Calu3 (cell line): ENCODE measurements at regions of chr3 and their contacts with region 1.

Region 1: DNA sequence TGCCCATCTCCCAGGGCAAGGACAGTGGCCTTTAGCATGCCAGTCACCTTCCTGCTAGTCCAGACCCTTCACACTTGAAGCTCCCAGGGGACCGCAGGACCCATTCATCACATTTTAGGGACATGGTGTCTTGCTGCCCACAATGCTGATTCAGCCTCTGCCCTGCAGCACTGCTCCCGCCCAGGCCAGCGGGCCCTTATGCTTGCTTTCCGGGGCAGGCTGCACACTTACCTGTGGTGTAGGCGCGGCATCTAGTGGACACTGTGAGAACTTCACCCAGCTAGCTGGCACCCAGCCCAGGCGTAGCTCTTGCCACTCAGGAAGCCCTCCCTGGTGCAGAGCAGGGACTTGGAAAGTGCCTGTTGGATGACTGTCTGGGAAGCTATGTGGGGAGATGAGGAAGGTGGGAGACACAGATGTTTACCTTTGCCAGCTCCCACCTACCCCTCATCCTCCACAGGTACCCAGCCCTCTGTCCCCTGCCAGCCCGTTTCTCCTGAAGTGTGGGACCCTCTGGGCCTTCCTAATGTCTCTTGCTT is 26.2 kb upstream of the NR2C2 start:
- DNase-seq: peak; percentile 87
- H3K4me3 Mint-ChIP-seq: no peak overlapping the region
- H3K27ac Mint-ChIP-seq: no peak overlapping the region
- H3K4me1 Mint-ChIP-seq: no peaks in the 10 kb centered on the region
- H3K27me3 Mint-ChIP-seq: peaks cover 64% of the 10 kb centered on the region
- CTCF ChIP-seq: peak; percentile 91

Region 2: GRCh38 chr3:13161024-13161759 is 1760.0 kb before region 1 on chr3:
- CTCF ChIA-PET with region 1: no interaction called
- intact Hi-C with region 1: no loop called
- DNase-seq: no peak
- H3K4me3 Mint-ChIP-seq: no peak overlapping the region
- H3K27ac Mint-ChIP-seq: no peak overlapping the region
- H3K4me1 Mint-ChIP-seq: no peaks in the 10 kb centered on the region
- H3K27me3 Mint-ChIP-seq: peaks cover 96% of the 10 kb centered on the region
- CTCF ChIP-seq: no peak

Region 3: GRCh38 chr3:14508961-14509795 is 412.0 kb before region 1 on chr3:
- CTCF ChIA-PET with region 1: no interaction called
- intact Hi-C with region 1: loop called (anchors 2 kb)
- DNase-seq: peak; percentile 82
- H3K4me3 Mint-ChIP-seq: no peak overlapping the region
- H3K27ac Mint-ChIP-seq: no peak overlapping the region
- H3K4me1 Mint-ChIP-seq: no peaks in the 10 kb centered on the region
- H3K27me3 Mint-ChIP-seq: peaks cover 31% of the 10 kb centered on the region
- CTCF ChIP-seq: peak; percentile 92

Region 4: GRCh38 chr3:14678015-14678503 is 243.1 kb before region 1 on chr3:
- CTCF ChIA-PET with region 1: interaction called, 22 read pairs
- intact Hi-C with region 1: loop called (anchors 1 kb)
- DNase-seq: no peak
- H3K4me3 Mint-ChIP-seq: no peak overlapping the region
- H3K27ac Mint-ChIP-seq: no peak overlapping the region
- H3K4me1 Mint-ChIP-seq: no peaks in the 10 kb centered on the region
- H3K27me3 Mint-ChIP-seq: peaks cover 9% of the 10 kb centered on the region
- CTCF ChIP-seq: no peak

Region 5: DNA sequence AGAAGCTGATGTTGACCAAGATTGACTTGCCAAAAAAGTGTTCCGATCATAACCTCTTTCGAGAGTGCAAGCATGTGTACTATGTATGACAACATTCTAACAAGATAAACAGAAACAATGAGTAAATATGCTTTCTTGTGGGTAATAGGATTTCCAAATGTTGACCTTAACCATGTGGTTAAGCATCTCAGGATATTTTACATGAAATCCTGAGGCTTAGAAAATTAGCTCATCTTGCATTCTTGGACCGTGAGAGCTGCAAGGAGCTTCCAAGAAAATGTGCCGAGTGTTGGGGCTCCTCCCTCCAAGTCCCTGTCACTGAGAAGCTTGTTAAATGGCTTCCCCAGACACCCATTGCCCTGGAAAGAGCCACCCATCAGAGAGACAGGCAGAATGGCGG is 196.1 kb before region 1 on chr3:
- CTCF ChIA-PET with region 1: no interaction called
- intact Hi-C with region 1: no loop called
- DNase-seq: no peak
- H3K4me3 Mint-ChIP-seq: no peak overlapping the region
- H3K27ac Mint-ChIP-seq: no peak overlapping the region
- H3K4me1 Mint-ChIP-seq: no peaks in the 10 kb centered on the region
- H3K27me3 Mint-ChIP-seq: peaks cover 8% of the 10 kb centered on the region
- CTCF ChIP-seq: no peak

Region 6: DNA sequence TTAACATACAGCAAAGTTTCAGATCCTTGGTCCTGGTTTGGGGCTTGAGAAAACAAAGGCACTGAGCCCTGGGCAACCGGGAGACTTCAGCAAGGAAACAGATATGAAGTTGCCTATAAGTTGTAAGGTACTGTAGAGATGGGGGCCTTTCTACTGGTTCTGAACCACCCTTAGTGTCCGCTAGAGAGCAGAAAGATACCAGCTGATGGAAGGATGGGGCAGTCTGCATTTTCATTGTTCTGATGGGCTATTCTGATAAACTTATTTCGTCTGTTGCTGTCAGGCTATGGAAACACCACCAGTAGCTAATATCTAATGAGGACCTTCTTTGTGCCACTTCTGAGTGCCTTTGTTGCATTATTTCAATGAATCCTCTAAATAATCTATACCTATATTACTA is 63.6 kb before region 1 on chr3:
- CTCF ChIA-PET with region 1: interaction called, 4 read pairs
- intact Hi-C with region 1: loop called (anchors 2 kb)
- DNase-seq: no peak
- H3K4me3 Mint-ChIP-seq: no peak overlapping the region
- H3K27ac Mint-ChIP-seq: no peak overlapping the region
- H3K4me1 Mint-ChIP-seq: no peaks in the 10 kb centered on the region
- H3K27me3 Mint-ChIP-seq: peaks cover 79% of the 10 kb centered on the region
- CTCF ChIP-seq: no peak

Region 7: DNA sequence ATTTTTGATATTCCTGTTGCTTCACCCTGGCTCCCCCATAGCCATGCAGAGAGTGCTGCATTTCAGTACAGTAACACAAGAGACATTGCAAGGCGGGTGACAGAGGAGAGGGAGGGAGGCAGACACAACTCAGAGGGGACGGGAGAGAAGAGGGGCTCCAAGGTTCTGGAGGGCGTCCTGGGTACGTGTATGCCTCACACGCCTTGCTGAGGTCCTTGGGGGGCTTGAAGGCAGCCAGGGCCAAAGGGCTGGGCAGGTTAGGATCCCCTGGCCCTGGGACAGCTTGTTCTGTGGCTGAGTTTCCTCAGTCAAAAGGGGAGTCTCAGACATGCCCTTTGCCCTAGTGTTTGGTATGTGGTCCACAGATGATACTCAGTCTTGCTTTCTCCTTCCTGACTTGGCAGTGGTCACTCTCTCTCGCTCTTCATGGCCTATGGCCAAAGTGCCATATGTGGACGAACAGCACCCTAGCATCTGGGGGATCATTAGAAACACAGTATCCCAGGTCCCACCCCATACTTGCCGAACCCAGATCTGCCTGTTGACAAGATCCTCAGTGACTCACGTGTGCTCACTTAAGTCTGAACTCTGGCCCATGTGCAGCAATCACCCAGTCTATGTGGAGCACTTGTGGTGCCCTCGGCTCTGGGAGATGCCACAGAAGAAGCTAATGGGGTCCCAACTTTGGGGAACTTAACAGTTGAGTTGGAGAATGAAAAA is 49.5 kb before region 1 on chr3:
- CTCF ChIA-PET with region 1: no interaction called
- intact Hi-C with region 1: no loop called
- DNase-seq: no peak
- H3K4me3 Mint-ChIP-seq: no peak overlapping the region
- H3K27ac Mint-ChIP-seq: no peak overlapping the region
- H3K4me1 Mint-ChIP-seq: no peaks in the 10 kb centered on the region
- H3K27me3 Mint-ChIP-seq: peaks cover 68% of the 10 kb centered on the region
- CTCF ChIP-seq: no peak

Region 8: DNA sequence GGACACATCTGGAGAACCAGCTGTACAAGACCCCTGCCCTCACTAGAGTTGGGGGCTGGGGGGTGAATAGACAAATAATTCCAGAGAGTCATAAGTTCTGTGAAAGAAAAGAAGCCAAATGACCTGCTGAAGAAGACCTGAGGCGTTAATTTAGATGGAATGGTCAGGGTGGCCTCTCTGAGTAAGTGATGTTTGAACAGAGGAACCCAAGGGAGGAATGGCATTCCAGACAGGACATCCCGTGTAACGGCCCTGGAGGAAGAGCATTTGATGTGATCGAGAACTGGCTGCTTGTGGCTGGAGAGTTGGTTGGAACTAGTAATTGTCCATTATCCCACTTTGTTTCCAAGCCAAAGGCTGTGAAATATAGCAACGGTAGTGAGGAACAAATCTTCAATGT is 28.0 kb after region 1 on chr3:
- CTCF ChIA-PET with region 1: no interaction called
- intact Hi-C with region 1: no loop called
- DNase-seq: no peak
- H3K4me3 Mint-ChIP-seq: peak overlapping the region; percentile 88
- H3K27ac Mint-ChIP-seq: peak overlapping the region; percentile 98
- H3K4me1 Mint-ChIP-seq: peaks cover 38% of the 10 kb centered on the region
- H3K27me3 Mint-ChIP-seq: no peaks in the 10 kb centered on the region
- CTCF ChIP-seq: no peak

Region 9: GRCh38 chr3:15042936-15043335 is 121.8 kb after region 1 on chr3:
- CTCF ChIA-PET with region 1: no interaction called
- intact Hi-C with region 1: loop called (anchors 5 kb)
- DNase-seq: no peak
- H3K4me3 Mint-ChIP-seq: no peak overlapping the region
- H3K27ac Mint-ChIP-seq: no peak overlapping the region
- H3K4me1 Mint-ChIP-seq: no peaks in the 10 kb centered on the region
- H3K27me3 Mint-ChIP-seq: no peaks in the 10 kb centered on the region
- CTCF ChIP-seq: no peak

Region 10: GRCh38 chr3:15205934-15206661 is 285.0 kb after region 1 on chr3 and contains the start of gene CAPN7:
- CTCF ChIA-PET with region 1: no interaction called
- intact Hi-C with region 1: loop called (anchors 10 kb)
- DNase-seq: peak; percentile 97
- H3K4me3 Mint-ChIP-seq: peak within 1 kb of the TSS; percentile 74
- H3K27ac Mint-ChIP-seq: peak within 1 kb of the TSS; percentile 79
- H3K4me1 Mint-ChIP-seq: no peaks in the 10 kb centered on the region
- H3K27me3 Mint-ChIP-seq: no peaks in the 10 kb centered on the region
- CTCF ChIP-seq: peak; percentile 30
- total RNA-seq, gene CAPN7: 24.1 and 24.8 TPM in 2 replicates